Activated naive CD4-positive, alpha-beta T cell treated with anti-CD3 and anti-CD28 coated beads for 36 hours (primary cell): ENCODE measurements at regions of chr1 and their contacts with region 1.

Region 1: DNA sequence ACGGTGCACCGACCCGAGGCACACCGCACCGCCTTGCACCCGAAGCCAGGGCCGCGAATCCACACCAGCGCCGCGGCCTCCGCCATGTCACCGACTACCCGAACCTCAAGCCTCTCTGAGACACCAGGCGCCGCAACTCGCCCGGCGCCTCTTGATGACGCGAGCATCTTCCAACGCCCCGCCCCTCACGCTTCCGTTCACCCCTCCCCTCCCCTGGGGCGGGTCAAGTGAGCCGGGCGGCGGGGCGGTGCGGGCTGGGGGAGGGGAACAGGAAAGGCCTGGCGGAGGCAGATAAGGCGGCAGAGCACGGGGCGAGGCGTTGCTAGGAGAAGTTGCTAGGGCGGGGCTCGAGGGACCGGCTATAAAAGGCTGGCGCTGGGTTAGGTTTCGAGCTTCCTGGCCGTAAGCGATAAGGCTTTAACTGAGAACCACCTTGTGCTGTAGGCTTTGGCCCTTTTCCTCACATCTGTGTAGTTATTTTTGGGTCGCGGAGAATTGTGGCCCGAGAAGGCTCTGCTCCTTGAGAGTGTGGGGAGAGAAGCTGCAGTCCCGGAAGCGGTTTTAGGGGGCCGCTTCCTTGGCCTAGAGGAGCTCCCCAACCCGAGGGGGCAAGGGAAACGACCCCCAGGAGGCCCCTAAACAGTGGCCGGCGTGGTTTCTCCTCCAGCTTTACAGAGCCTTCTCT is at the start of gene SDE2:
- DNase-seq: peak; percentile 100
- H3K4me3 Mint-ChIP-seq: peak within 1 kb of the TSS; percentile 100
- H3K27ac Mint-ChIP-seq: peak within 1 kb of the TSS; percentile 100
- H3K4me1 Mint-ChIP-seq: peaks cover 68% of the 10 kb centered on the region
- H3K27me3 Mint-ChIP-seq: no peaks in the 10 kb centered on the region
- total RNA-seq, gene SDE2: 15.3 to 16.5 TPM

Region 2: DNA sequence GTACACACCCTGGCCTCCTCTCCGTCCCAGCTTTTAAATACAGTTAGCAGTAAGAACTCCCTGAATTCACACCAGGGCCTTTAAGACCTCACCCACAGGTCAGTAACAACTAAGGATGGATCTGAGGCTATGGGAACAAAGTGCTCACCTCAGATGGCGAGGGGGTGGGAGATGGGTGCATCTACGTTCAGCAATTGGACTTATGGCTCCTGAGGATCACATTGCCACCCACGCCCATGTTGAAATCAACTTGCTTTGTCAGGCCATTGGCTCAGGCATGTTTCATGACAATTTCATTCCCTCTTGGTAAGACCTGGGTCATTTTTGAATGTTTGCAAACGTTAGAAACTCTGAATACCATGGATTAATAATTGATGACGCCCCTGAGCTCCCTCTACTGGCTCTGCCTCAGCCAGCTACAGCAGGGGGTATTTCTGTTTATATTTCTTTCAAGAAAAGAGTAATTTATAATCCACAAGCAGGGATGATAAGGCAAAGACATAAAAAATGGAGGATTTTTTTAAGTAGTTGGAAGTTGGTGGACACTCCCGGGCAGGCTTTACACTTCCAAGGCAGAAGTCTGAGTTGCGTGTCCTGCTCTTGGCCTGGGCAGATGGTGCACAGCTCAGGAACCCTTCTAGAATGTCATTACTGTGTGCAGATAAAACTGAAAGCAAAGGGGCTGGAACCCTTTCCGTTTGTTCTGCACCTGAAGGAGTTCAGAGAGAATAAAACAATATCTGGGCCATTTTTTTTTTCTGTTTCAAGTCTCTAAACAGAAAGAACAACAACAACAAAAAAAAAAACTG is 557.9 kb before region 1 on chr1:
- CTCF ChIA-PET with region 1: no interaction called
- intact Hi-C with region 1: loop called (anchors 1 kb)
- DNase-seq: no peak
- H3K4me3 Mint-ChIP-seq: peak overlapping the region; percentile 12
- H3K27ac Mint-ChIP-seq: peak overlapping the region; percentile 36
- H3K4me1 Mint-ChIP-seq: peaks cover 51% of the 10 kb centered on the region
- H3K27me3 Mint-ChIP-seq: no peaks in the 10 kb centered on the region

Region 3: GRCh38 chr1:225710804-225711203 is 288.6 kb before region 1 on chr1:
- CTCF ChIA-PET with region 1: no interaction called
- intact Hi-C with region 1: no loop called
- DNase-seq: no peak
- H3K4me3 Mint-ChIP-seq: no peak overlapping the region
- H3K27ac Mint-ChIP-seq: no peak overlapping the region
- H3K4me1 Mint-ChIP-seq: no peaks in the 10 kb centered on the region
- H3K27me3 Mint-ChIP-seq: no peaks in the 10 kb centered on the region

Region 4: GRCh38 chr1:225881969-225882693 is 117.2 kb before region 1 on chr1 and contains the start of gene TMEM63A:
- CTCF ChIA-PET with region 1: no interaction called
- intact Hi-C with region 1: loop called (anchors 5 kb)
- DNase-seq: peak; percentile 88
- H3K4me3 Mint-ChIP-seq: peak within 1 kb of the TSS; percentile 92
- H3K27ac Mint-ChIP-seq: peak within 1 kb of the TSS; percentile 91
- H3K4me1 Mint-ChIP-seq: peaks cover 49% of the 10 kb centered on the region
- H3K27me3 Mint-ChIP-seq: no peaks in the 10 kb centered on the region
- total RNA-seq, gene TMEM63A: 34.3 to 34.7 TPM

Region 5: GRCh38 chr1:225987491-225988316 is 11.7 kb before region 1 on chr1:
- CTCF ChIA-PET with region 1: interaction called, 32 read pairs
- intact Hi-C with region 1: loop called (anchors 1 kb)
- DNase-seq: no peak
- H3K4me3 Mint-ChIP-seq: no peak overlapping the region
- H3K27ac Mint-ChIP-seq: peak overlapping the region; percentile 56
- H3K4me1 Mint-ChIP-seq: peaks cover 30% of the 10 kb centered on the region
- H3K27me3 Mint-ChIP-seq: no peaks in the 10 kb centered on the region

Region 6: DNA sequence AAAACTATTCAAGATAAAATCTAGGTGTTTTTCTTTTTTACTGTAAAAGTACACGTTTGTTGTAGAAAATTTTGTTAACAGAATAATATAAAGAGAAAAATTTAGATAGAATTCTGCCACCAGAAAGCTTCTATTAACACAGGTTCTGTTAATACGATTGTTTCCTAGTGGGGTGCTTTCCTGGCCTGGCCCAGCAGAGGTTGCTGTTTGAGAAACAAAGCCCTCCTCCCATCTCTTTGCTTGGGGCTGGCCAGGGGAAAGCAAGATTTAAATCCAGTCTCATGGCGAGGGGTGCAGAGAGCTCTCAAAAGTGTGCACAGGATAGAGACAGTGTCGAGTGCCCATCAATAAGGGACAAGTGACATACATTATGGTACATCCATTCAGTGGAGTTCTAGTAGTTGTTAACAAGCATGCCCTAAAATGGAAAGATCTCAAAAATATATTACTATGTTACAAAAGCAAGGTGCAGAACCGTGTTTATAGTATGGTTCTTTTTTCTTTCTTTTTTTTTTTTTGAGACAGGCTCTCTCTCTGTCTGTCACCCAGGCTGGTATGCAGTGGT is 201.7 kb after region 1 on chr1:
- CTCF ChIA-PET with region 1: no interaction called
- intact Hi-C with region 1: loop called (anchors 1 kb)
- DNase-seq: peak; percentile 16
- H3K4me3 Mint-ChIP-seq: no peak overlapping the region
- H3K27ac Mint-ChIP-seq: no peak overlapping the region
- H3K4me1 Mint-ChIP-seq: no peaks in the 10 kb centered on the region
- H3K27me3 Mint-ChIP-seq: peaks cover 6% of the 10 kb centered on the region

Region 7: GRCh38 chr1:226407497-226408284 is 408.3 kb after region 1 on chr1 and contains the start of gene PARP1:
- CTCF ChIA-PET with region 1: no interaction called
- intact Hi-C with region 1: loop called (anchors 1 kb)
- DNase-seq: peak; percentile 87
- H3K4me3 Mint-ChIP-seq: peak within 1 kb of the TSS; percentile 99
- H3K27ac Mint-ChIP-seq: peak within 1 kb of the TSS; percentile 98
- H3K4me1 Mint-ChIP-seq: peaks cover 39% of the 10 kb centered on the region
- H3K27me3 Mint-ChIP-seq: no peaks in the 10 kb centered on the region
- total RNA-seq, gene PARP1: 265 to 273 TPM